PC-9 (cell line): ENCODE measurements at regions of chr7 and their contacts with region 1.

Region 1: GRCh38 chr7:104923010-104923421 is 91.0 kb upstream of the KMT2E start:
- DNase-seq: peak; percentile 65 to 76
- H3K4me3 ChIP-seq: no peak overlapping the region
- H3K27ac ChIP-seq: no peak overlapping the region
- H3K4me1 ChIP-seq: no peaks in the 10 kb centered on the region
- H3K27me3 ChIP-seq: no peaks in the 10 kb centered on the region
- CTCF ChIP-seq: peak; percentile 73

Region 2: DNA sequence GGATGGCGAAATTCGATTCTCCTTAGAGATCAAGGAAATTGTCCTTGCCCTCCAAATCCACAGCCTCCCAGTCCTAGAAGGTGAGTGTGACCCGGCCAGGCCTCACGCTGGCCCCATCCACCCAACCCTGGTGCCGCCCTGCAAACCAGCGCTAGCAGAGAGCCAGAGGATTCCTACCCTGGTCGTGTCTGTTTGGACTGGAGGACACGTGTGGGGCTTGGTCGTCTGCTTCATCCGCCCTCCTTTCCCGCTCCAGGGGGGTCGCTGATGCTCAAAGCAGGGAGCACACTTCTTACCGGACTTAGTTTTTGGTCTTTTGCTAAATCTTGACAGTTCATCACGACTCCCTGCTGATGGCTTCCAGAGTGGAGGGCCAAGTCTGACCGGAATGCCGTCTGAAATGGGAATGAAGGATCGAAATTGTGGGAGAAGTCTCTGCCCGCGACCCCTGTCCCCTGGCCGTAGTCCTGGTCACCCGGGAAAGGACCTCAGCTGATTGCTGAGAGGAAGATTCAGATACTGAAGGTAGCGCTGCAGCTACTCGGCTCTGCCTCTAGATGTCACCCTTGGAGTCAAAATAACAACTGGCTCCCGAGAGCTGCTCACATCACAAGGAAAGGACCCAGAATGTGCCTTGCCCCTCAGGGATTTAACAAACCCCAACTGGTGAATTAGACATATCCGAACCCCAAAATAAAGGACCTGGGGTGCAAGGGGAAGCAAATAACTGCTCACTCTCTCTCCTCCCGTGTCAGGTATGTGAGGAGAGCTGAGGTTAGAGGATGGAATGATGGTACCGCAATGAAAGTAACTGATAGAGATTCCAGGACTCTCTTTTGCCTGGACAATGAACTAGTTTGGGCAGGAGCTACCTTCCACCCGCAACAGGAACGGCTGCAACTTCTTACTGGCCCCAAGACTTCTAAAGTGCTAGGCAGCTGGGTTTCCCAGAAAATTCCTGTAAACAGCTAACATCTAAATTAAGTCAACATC is 691.7 kb before region 1 on chr7:
- CTCF ChIA-PET with region 1: interaction called, 30 read pairs
- POLR2A ChIA-PET with region 1: no interaction called
- intact Hi-C with region 1: loop called (anchors 1 kb)
- DNase-seq: peak; percentile 35 to 37
- H3K4me3 ChIP-seq: no peak overlapping the region
- H3K27ac ChIP-seq: no peak overlapping the region
- H3K4me1 ChIP-seq: no peaks in the 10 kb centered on the region
- H3K27me3 ChIP-seq: peaks cover 2% of the 10 kb centered on the region; the same call in 1 of the 2 replicates
- CTCF ChIP-seq: peak; percentile 73

Region 3: DNA sequence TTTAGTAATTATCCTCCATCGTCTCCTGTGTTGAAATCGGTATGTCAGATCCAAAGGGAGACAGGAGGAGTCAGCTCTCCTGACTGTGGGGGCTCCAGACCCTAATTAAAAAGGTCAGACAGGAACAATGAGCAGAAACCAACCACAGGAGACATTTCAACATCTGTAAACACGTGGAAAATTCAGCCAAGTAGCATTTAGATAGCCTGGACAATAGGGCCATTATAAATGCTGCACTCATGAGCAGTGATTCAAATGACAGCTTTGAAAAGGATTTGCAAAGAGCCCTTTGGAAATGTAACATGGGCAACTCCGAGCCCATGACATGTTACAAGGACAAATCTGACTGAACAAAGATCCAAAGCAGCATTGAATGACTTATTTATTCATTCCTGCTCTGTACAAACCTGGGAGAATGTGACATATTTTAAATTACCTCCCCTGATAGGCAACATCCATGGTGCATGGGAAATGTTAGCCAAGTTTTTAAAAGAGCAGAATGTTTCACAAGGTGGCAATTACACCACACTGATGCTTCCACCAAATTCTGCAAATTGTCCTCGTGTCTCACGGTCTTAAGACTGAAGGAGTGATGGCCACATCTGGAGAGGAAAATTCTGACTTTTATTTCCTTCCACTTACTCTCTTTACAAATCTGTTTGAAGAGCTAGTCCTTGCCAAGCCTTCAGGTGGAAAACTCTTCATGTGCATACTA is 22.3 kb before region 1 on chr7:
- CTCF ChIA-PET with region 1: no interaction called
- POLR2A ChIA-PET with region 1: no interaction called
- intact Hi-C with region 1: no loop called
- DNase-seq: no peak
- H3K4me3 ChIP-seq: no peak overlapping the region
- H3K27ac ChIP-seq: no peak overlapping the region
- H3K4me1 ChIP-seq: no peaks in the 10 kb centered on the region
- H3K27me3 ChIP-seq: peaks cover 9% of the 10 kb centered on the region
- CTCF ChIP-seq: no peak

Region 4: DNA sequence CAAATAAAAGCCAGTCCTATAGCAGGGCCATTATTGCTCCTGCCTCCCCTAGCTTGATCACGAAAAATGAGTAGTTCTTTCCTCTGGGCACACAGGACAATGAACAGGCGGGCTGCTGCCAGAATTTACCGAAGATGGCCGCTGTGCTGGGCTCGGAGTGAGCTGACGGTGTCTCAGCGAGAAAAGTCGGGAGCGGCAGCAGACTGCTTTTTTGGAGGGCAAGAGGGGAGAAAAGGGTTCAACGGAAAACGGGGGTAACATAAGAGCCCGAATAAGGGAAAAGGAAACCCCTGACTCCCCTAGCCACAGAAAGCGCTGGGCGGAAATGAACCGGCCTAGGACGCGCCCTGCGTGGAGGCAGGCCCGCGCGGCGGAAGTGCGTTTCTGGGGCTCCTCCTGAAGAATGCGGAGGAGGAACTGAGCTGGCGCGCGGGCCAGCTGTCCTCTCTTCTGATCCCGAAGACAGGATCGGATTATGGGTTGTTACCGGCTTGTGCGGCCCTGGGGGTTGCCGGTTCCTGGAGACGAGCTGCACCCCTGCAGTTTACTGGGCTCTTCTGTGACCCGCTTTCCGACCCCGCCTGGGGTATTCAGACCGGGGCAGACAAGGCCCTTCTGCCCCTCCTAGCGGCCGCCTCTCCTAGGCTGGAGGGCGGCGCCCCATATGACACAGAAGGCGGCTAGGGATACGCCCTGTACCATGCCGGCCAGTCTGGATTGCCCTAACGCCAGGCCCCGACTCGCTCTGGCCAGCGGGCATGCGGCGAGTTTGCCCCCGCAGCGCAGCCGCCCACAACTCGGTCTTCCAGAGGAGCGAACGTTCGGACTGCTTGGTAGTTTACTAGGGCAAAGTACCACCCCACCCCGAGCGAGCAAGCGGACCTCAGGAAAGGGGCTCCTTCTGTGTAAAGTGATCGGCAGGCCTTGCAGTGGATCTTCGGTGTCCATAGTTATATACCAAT is 60.8 kb after region 1 on chr7:
- CTCF ChIA-PET with region 1: no interaction called
- POLR2A ChIA-PET with region 1: no interaction called
- intact Hi-C with region 1: loop called (anchors 2 kb)
- DNase-seq: peak; percentile 76 to 88
- H3K4me3 ChIP-seq: peak overlapping the region; percentile 69
- H3K27ac ChIP-seq: peak overlapping the region; percentile 72
- H3K4me1 ChIP-seq: peaks cover 35% of the 10 kb centered on the region
- H3K27me3 ChIP-seq: no peaks in the 10 kb centered on the region
- CTCF ChIP-seq: peak; percentile 39; the same call in 1 of the 2 replicates

Region 5: DNA sequence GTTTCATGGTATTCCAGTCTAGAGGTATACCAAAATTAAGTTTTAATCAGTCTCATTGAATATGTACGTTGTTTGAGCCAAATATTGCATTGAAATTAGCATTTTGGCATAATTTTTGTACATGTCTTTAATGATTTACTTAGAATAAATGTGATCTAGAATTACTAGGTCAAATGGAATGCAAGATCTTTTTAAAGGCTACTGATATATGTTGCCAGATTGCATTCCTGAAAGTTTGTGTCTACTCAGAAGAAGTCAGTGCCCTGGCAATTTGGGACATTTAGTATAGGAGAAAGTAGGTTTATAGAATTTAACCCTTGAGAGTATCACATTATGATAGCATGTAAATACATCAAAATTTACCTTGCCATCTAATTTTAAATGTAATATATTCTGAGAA is 123.4 kb after region 1 on chr7:
- CTCF ChIA-PET with region 1: no interaction called
- POLR2A ChIA-PET with region 1: no interaction called
- intact Hi-C with region 1: loop called (anchors 2 kb)
- DNase-seq: peak in 1 of 2 experiments; percentile 78
- H3K4me3 ChIP-seq: no peak overlapping the region
- H3K27ac ChIP-seq: peak overlapping the region; percentile 31
- H3K4me1 ChIP-seq: peaks cover 13% of the 10 kb centered on the region
- H3K27me3 ChIP-seq: no peaks in the 10 kb centered on the region
- CTCF ChIP-seq: no peak

Region 6: GRCh38 chr7:105429746-105430612 is 507.0 kb after region 1 on chr7:
- CTCF ChIA-PET with region 1: no interaction called
- POLR2A ChIA-PET with region 1: no interaction called
- intact Hi-C with region 1: loop called (anchors 2 kb)
- DNase-seq: peak; percentile 39 to 45
- H3K4me3 ChIP-seq: no peak overlapping the region
- H3K27ac ChIP-seq: no peak overlapping the region
- H3K4me1 ChIP-seq: no peaks in the 10 kb centered on the region
- H3K27me3 ChIP-seq: no peaks in the 10 kb centered on the region
- CTCF ChIP-seq: peak; percentile 70

Region 7: GRCh38 chr7:105589356-105590077 is 666.5 kb after region 1 on chr7:
- CTCF ChIA-PET with region 1: no interaction called
- POLR2A ChIA-PET with region 1: no interaction called
- intact Hi-C with region 1: loop called (anchors 1 kb)
- DNase-seq: peak; percentile 62 to 66
- H3K4me3 ChIP-seq: no peak overlapping the region
- H3K27ac ChIP-seq: no peak overlapping the region
- H3K4me1 ChIP-seq: no peaks in the 10 kb centered on the region
- H3K27me3 ChIP-seq: no peaks in the 10 kb centered on the region
- CTCF ChIP-seq: peak; percentile 78